Mammary epithelial cell (primary cell): ENCODE measurements at regions of chr1 and their contacts with region 1.

Region 1: GRCh38 chr1:156193488-156194299 is at the start of gene SLC25A44:
- DNase-seq: peak; percentile 99
- H3K4me3 ChIP-seq: peak within 1 kb of the TSS; percentile 79 to 93 (median 80)
- H3K27ac ChIP-seq: peak within 1 kb of the TSS; percentile 74
- H3K4me1 ChIP-seq: peaks cover 9% of the 10 kb centered on the region
- H3K27me3 ChIP-seq: no peaks in the 10 kb centered on the region
- CTCF ChIP-seq: peak in 1 of 2 donors; percentile 58
- total RNA-seq, gene SLC25A44: 15.8 to 18.5 TPM

Region 2: DNA sequence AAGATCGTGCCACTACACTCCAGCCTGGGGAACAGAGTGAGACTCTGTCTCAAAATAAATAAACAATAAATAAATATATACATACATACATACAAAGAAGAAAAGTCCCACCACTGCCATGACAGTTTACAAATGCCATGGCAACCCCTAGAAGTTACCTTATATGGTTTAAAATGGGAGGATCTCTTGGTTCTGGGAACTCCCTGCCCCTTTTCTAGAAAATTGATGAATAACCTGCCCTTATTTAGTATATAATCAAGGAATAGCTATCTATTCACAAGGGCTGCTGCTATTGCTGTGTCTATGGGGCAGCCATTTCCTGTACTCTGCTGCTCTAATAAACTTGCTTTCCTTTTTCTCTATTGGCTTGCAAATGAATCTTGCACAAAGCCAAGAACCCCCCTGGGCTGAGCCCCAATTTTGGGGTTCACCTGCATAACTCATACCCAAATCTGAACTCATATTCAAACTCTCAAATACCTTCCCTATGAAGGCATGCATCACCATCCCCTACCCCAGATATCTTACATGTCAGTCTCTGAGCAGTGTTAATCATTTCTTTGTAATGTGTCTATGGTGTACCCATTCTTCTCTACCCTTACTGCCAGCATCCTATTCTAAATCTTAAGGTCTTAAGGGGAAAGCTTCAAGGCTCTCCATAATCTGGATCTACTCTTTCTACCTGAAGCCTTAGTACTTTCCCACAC is 345.7 kb before region 1 on chr1:
- CTCF ChIA-PET with region 1: no interaction called
- dilution Hi-C with region 1: loop called (anchors 10 kb)
- in situ Hi-C with region 1: no loop called
- intact Hi-C with region 1: no loop called
- DNase-seq: no peak
- H3K4me3 ChIP-seq: no peak overlapping the region
- H3K27ac ChIP-seq: no peak overlapping the region
- H3K4me1 ChIP-seq: no peaks in the 10 kb centered on the region
- H3K27me3 ChIP-seq: no peaks in the 10 kb centered on the region
- CTCF ChIP-seq: no peak

Region 3: GRCh38 chr1:155938220-155938627 is 255.5 kb before region 1 on chr1:
- CTCF ChIA-PET with region 1: no interaction called
- dilution Hi-C with region 1: no loop called
- in situ Hi-C with region 1: no loop called
- intact Hi-C with region 1: no loop called
- DNase-seq: peak; percentile 67
- H3K4me3 ChIP-seq: no peak overlapping the region
- H3K27ac ChIP-seq: no peak overlapping the region
- H3K4me1 ChIP-seq: peaks cover 42% of the 10 kb centered on the region
- H3K27me3 ChIP-seq: no peaks in the 10 kb centered on the region
- CTCF ChIP-seq: peak; percentile 78 to 84

Region 4: GRCh38 chr1:156146020-156146768 is 47.5 kb before region 1 on chr1:
- CTCF ChIA-PET with region 1: interaction called, 3 read pairs
- dilution Hi-C with region 1: loop called (anchors 5 kb)
- in situ Hi-C with region 1: no loop called
- intact Hi-C with region 1: loop called (anchors 5 kb)
- DNase-seq: peak; percentile 93
- H3K4me3 ChIP-seq: no peak overlapping the region
- H3K27ac ChIP-seq: no peak overlapping the region
- H3K4me1 ChIP-seq: peaks cover 10% of the 10 kb centered on the region
- H3K27me3 ChIP-seq: no peaks in the 10 kb centered on the region
- CTCF ChIP-seq: peak; percentile 67 to 74

Region 5: GRCh38 chr1:156212833-156213643 is 19.3 kb after region 1 on chr1 and contains the start of gene PMF1:
- CTCF ChIA-PET with region 1: no interaction called
- dilution Hi-C with region 1: no loop called
- in situ Hi-C with region 1: no loop called
- intact Hi-C with region 1: loop called (anchors 2 kb)
- DNase-seq: peak; percentile 94
- H3K4me3 ChIP-seq: peak within 1 kb of the TSS; percentile 44 to 91 (median 53)
- H3K27ac ChIP-seq: peak within 1 kb of the TSS; percentile 87
- H3K4me1 ChIP-seq: peaks cover 24% of the 10 kb centered on the region
- H3K27me3 ChIP-seq: no peaks in the 10 kb centered on the region
- CTCF ChIP-seq: no peak
- total RNA-seq, gene PMF1: 23.8 to 33.2 TPM

Region 6: GRCh38 chr1:156282479-156283222 is 89.0 kb after region 1 on chr1 and contains the start of gene SMG5:
- CTCF ChIA-PET with region 1: no interaction called
- dilution Hi-C with region 1: no loop called
- in situ Hi-C with region 1: no loop called
- intact Hi-C with region 1: loop called (anchors 5 kb)
- DNase-seq: peak; percentile 98
- H3K4me3 ChIP-seq: peak within 1 kb of the TSS; percentile 73 to 93 (median 86)
- H3K27ac ChIP-seq: peak within 1 kb of the TSS; percentile 68
- H3K4me1 ChIP-seq: peaks cover 38% of the 10 kb centered on the region
- H3K27me3 ChIP-seq: no peaks in the 10 kb centered on the region
- CTCF ChIP-seq: no peak
- total RNA-seq, gene SMG5: 74.5 to 76.7 TPM